Caco-2 (cell line): ENCODE measurements at regions of chr5 and their contacts with region 1.

Region 1: DNA sequence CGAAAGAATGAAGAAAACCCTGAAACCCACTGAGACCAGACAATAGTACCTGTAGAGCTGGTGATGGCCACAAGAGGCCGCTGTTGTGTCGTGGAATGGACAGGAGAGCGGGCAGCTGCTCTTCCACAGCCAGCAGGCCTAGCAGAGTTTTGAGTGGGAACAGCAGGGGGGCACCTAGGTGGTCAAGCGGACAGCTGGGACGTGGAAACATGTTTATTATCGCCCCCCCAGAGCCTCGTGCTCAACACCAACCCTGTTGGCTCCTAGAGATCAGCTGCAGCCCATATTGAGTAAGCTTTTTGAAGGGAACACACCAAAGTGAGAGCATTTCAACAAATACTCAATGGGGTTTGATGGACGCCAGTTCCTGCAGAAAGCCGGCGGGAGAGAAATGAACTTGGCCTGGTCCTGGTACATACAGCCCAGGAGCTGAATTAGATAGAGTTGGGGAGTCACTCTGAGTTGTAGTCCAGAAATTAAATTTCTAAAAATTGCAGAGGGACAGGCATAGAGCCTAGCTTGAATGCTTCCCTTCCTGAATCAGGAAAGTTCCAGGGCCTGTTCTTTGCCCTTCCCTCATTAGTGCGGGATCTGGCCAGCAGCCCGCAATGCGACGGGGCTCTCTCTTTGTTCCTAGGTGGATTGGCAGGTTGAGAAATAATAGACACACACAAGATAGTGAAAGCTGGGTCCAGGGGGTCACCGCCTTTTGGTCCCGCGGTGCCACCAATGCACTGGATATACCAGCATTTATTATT is 33.8 kb downstream of the MFAP3 start:
- DNase-seq: peak; percentile 72 to 82
- H3K4me3 ChIP-seq: no peak overlapping the region
- H3K4me3 Mint-ChIP-seq: no peak overlapping the region
- H3K27ac Mint-ChIP-seq: no peak overlapping the region
- H3K4me1 ChIP-seq: no peaks in the 10 kb centered on the region
- H3K4me1 Mint-ChIP-seq: peaks cover 7% of the 10 kb centered on the region
- H3K27me3 ChIP-seq: no peaks in the 10 kb centered on the region
- H3K27me3 Mint-ChIP-seq: peaks cover 5% of the 10 kb centered on the region
- CTCF ChIP-seq: peak; percentile 89 to 98

Region 2: DNA sequence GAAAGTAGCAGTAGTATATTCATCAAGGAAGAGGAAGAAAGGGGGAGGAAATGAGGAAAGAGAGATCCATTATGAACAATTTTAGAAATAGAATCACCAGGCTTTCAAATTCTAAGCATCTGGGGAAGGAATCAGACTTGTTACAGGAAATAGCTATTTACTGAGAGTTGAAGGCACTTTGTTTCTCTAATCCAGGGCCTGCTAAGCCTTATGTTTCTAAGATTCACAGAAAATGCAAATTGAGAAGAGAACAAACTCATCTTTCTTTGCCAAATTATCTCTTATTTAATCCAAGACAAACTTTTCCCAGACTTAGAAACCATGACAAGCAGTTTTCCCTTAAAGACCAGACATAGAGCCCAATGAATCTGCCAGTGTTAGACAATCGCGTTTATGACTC is 1139.5 kb before region 1 on chr5:
- CTCF ChIA-PET with region 1: no interaction called
- POLR2A ChIA-PET with region 1: no interaction called
- intact Hi-C with region 1: no loop called
- DNase-seq: no peak
- H3K4me3 ChIP-seq: no peak overlapping the region
- H3K4me3 Mint-ChIP-seq: no peak overlapping the region
- H3K27ac Mint-ChIP-seq: no peak overlapping the region
- H3K4me1 ChIP-seq: no peaks in the 10 kb centered on the region
- H3K4me1 Mint-ChIP-seq: no peaks in the 10 kb centered on the region
- H3K27me3 ChIP-seq: no peaks in the 10 kb centered on the region
- H3K27me3 Mint-ChIP-seq: no peaks in the 10 kb centered on the region
- CTCF ChIP-seq: no peak

Region 3: GRCh38 chr5:154133591-154133990 is 61.0 kb after region 1 on chr5:
- CTCF ChIA-PET with region 1: interaction called, 3 read pairs
- POLR2A ChIA-PET with region 1: no interaction called
- intact Hi-C with region 1: loop called (anchors 5 kb)
- DNase-seq: peak in 1 of 2 experiments; percentile 15
- H3K4me3 ChIP-seq: no peak overlapping the region
- H3K4me3 Mint-ChIP-seq: no peak overlapping the region
- H3K27ac Mint-ChIP-seq: no peak overlapping the region
- H3K4me1 ChIP-seq: no peaks in the 10 kb centered on the region
- H3K4me1 Mint-ChIP-seq: no peaks in the 10 kb centered on the region
- H3K27me3 ChIP-seq: no peaks in the 10 kb centered on the region
- H3K27me3 Mint-ChIP-seq: peaks cover 21% of the 10 kb centered on the region
- CTCF ChIP-seq: no peak

Region 4: DNA sequence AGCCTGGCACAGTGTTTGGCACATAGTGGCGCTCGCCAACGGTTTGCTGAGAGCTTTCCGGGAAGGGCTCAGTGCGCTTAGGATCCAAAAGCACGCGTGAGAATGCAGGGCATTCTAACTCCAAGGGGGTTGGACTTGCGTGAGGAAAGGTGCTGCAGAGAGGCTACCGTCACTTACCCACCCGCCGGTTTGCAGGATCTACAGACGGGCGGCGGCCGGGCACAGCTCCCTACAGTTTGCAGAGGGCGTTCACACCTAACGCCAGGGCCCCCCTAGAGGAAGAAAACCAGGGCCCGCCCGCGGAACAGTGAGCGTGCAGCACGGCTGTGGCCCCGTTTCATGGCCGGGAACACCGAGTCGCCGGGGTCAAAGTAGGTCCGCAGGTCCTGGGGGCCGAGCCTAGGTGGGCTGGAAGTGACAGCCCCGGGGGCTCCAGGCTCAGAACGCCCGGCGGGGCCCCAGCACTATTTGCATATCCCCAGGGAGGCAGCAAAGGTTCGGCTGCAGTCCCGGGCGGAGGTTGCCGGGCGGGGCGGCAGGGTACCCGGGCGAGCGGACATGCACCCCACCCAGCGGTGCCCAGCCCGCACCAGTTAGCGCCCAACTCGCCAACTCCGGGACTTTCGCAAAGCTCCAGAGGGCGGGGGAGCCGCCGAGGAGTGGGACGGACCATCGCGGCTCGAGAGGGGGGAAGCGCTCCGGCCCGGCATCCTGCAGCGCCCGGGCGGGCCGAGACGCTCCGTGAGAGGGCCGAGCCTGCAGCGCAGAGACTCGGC is 117.4 kb after region 1 on chr5:
- CTCF ChIA-PET with region 1: interaction called, 14 read pairs
- POLR2A ChIA-PET with region 1: no interaction called
- intact Hi-C with region 1: no loop called
- DNase-seq: peak; percentile 76 to 80
- H3K4me3 ChIP-seq: peak overlapping the region; percentile 94
- H3K4me3 Mint-ChIP-seq: peak overlapping the region; percentile 72
- H3K27ac Mint-ChIP-seq: no peak overlapping the region
- H3K4me1 ChIP-seq: no peaks in the 10 kb centered on the region
- H3K4me1 Mint-ChIP-seq: peaks cover 25% of the 10 kb centered on the region
- H3K27me3 ChIP-seq: no peaks in the 10 kb centered on the region; the same call in 1 of the 2 replicates
- H3K27me3 Mint-ChIP-seq: peaks cover 10% of the 10 kb centered on the region
- CTCF ChIP-seq: peak; percentile 41 to 72

Region 5: GRCh38 chr5:154296525-154297208 is 224.1 kb after region 1 on chr5:
- CTCF ChIA-PET with region 1: no interaction called
- POLR2A ChIA-PET with region 1: no interaction called
- intact Hi-C with region 1: loop called (anchors 2 kb)
- DNase-seq: peak; percentile 56 to 75
- H3K4me3 ChIP-seq: no peak overlapping the region
- H3K4me3 Mint-ChIP-seq: no peak overlapping the region
- H3K27ac Mint-ChIP-seq: peak overlapping the region; percentile 23
- H3K4me1 ChIP-seq: peaks cover 28% of the 10 kb centered on the region
- H3K4me1 Mint-ChIP-seq: peaks cover 14% of the 10 kb centered on the region
- H3K27me3 ChIP-seq: no peaks in the 10 kb centered on the region
- H3K27me3 Mint-ChIP-seq: no peaks in the 10 kb centered on the region
- CTCF ChIP-seq: no peak

Region 6: GRCh38 chr5:154467655-154468354 is 395.2 kb after region 1 on chr5:
- CTCF ChIA-PET with region 1: no interaction called
- POLR2A ChIA-PET with region 1: no interaction called
- intact Hi-C with region 1: loop called (anchors 2 kb)
- DNase-seq: peak; percentile 74 to 87
- H3K4me3 ChIP-seq: no peak overlapping the region
- H3K4me3 Mint-ChIP-seq: no peak overlapping the region
- H3K27ac Mint-ChIP-seq: no peak overlapping the region
- H3K4me1 ChIP-seq: peaks cover 8% of the 10 kb centered on the region
- H3K4me1 Mint-ChIP-seq: peaks cover 11% of the 10 kb centered on the region
- H3K27me3 ChIP-seq: no peaks in the 10 kb centered on the region; the same call in 1 of the 2 replicates
- H3K27me3 Mint-ChIP-seq: no peaks in the 10 kb centered on the region
- CTCF ChIP-seq: peak; percentile 93 to 94